ENCODE measurements at regions of chr3 and their contacts with region 1.

Region 1: DNA sequence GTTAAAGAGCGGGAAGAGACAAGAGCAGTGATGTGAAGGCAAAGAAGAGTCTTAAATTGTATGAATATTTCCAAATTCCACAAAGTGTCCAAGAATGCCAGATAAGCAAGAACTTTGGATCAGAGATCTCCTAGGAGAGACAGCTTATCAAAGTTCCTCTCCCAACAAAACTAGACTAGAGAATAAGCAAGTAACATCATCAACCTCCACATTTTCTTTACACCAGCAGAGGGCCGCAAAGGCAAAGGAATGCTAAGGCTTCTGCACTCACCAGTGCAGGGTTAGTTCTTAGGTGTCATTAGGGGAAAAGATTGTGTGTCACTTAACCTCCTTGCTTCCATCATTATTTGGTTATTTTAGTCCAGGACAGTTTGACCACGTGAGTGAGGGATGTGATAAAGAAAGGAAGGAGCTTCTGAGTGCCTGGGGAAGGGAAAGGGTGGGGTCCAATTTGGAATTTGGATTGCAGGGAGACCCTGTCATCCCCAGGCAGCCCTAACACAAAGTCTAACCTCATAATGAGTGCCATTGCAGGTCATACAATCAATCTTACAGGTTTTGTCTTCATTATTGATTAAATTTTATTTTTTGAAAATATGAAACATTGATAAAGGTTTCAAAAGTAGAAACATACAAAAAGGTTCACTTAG is 7.5 kb upstream of the CMTM6 start:
- DNase-seq: peak; percentile 78
- H3K4me3 Mint-ChIP-seq: no peak overlapping the region
- H3K27ac Mint-ChIP-seq: no peak overlapping the region
- H3K4me1 Mint-ChIP-seq: no peaks in the 10 kb centered on the region
- H3K27me3 Mint-ChIP-seq: no peaks in the 10 kb centered on the region

Region 2: GRCh38 chr3:32667122-32667521 is 156.9 kb after region 1 on chr3:
- CTCF ChIA-PET with region 1: interaction called, 8 read pairs
- POLR2A ChIA-PET with region 1: no interaction called
- intact Hi-C with region 1: loop called (anchors 1 kb)
- DNase-seq: no peak
- H3K4me3 Mint-ChIP-seq: no peak overlapping the region
- H3K27ac Mint-ChIP-seq: no peak overlapping the region
- H3K4me1 Mint-ChIP-seq: no peaks in the 10 kb centered on the region
- H3K27me3 Mint-ChIP-seq: no peaks in the 10 kb centered on the region

Region 3: DNA sequence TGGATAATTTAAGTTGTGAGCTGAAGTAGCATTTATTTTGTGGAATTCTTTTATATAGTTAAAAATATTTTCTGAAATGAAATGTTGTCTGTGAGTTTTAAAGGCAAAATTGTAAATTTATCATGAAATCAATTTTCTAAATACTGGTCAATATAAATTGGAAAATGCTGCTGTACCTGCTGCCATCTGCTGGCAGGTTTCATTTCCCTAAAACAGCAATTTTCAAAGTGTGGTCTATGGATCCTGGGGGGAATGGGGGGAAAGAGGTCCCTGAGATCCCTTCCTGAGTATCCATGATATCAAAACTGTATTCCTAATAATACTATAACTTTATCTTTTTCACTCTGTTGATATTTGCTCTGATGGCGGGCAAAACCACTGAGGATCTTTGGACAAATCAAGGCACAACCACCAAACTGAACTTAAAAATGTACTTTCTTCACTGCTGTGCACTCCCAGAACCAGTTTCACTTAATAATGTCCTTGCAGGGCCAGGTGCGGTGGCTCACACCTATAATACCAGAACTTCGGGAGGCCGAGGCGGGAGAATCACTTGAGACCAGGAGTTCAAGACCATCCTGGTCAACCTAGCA is 424.0 kb after region 1 on chr3:
- CTCF ChIA-PET with region 1: no interaction called
- POLR2A ChIA-PET with region 1: no interaction called
- intact Hi-C with region 1: loop called (anchors 5 kb)
- DNase-seq: peak; percentile 39
- H3K4me3 Mint-ChIP-seq: no peak overlapping the region
- H3K27ac Mint-ChIP-seq: no peak overlapping the region
- H3K4me1 Mint-ChIP-seq: no peaks in the 10 kb centered on the region
- H3K27me3 Mint-ChIP-seq: peaks cover 2% of the 10 kb centered on the region

Measured in activated CD4-positive, alpha-beta memory T cell treated with anti-CD3 and anti-CD28 coated beads for 36 hours (primary cell).